ENCODE measurements at regions of chr1 and their contacts with region 1.

Region 1: DNA sequence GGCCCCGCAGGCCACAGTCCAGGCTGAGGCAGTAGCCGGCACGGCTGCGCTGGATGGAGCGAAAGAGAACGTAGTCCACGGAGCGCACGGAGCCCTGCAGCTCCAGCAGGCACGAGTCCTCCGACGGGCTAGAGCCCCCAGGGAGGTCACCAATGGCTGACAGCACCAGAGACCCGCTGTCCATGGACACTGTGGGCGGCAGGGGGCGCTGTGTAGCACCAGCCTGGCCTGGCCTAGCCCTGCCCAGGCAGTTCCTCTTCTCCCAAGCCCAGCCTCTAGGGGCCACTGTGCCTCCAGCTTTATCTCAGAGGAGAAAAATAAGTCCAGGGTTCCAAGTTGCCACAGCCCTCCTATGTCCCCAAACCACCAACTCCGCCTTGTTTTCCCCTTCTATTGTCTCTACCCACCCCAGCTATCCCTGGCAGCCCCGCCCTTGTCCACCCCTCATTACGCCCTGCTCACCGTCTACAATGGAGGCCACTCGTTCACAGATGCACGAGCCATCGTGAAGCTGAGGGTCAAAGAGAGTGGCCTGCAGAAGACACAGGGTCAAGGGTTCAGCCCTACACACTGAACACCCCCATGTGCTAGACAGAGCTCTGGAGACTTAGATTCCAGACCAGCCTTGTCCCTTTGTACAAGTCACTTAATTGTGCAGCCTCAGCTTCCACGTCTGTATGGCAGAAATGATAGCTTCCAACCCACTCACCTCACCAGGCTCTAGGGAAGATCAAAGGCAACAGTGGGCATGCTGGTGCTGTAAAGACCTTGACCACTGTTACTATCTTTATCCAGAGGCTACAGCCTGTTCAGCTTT is 4.4 kb downstream of the ENTREP3 start:
- DNase-seq: peak; percentile 98
- H3K4me3 ChIP-seq: peak overlapping the region; percentile 42
- H3K27ac ChIP-seq: peak overlapping the region; percentile 80
- H3K4me1 ChIP-seq: peaks cover 23% of the 10 kb centered on the region
- H3K27me3 ChIP-seq: no peaks in the 10 kb centered on the region
- CTCF ChIP-seq: peak; percentile 100

Region 2: DNA sequence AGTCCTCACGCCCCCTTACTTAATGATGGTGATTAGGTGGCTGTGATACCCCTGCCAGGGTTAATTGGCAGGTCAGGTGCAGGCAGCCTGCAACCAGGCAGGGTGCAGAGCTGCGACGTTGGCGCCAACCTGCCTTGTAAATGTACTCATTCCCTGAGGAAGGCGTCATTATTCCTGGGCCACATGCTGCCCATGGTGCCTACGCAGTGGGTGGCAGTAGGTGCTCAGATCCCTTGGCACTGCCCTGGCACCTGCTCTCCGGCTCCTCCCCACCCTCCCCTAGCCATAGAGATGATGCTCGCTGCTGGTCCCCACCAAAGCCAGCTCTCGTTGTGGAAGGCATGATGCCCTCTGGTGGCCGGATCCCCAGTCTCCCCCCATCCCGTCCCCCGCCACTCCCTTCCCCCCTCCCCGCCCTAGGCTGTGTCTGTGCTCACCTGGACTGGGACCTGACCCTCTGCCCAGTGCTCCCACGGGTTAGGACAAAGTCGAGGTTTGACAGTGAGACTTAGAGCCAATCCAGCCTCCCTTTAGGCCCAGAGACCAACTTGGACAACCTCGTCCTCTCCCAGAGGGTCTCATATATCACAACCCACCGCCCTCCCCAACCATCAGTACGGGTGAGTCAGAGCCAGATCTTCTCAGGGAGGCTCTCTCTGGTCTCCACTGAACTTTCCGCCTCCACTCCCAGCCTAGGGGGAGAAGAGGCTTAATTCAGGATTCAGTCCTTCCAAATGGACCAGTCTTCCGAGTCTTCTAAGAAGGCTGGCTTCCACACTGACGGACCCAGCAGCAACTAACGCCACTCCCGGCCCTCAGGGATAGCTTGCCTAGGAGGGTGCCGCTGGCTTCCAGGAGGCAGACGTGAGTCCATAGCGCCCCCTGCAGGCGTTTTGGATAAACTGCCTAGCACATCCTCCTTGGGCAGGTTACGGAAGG is 83.4 kb before region 1 on chr1:
- CTCF ChIA-PET with region 1: no interaction called
- POLR2A ChIA-PET with region 1: no interaction called
- intact Hi-C with region 1: no loop called
- DNase-seq: peak; percentile 93
- H3K4me3 ChIP-seq: peak overlapping the region; percentile 11
- H3K27ac ChIP-seq: no peak overlapping the region
- H3K4me1 ChIP-seq: peaks cover 12% of the 10 kb centered on the region
- H3K27me3 ChIP-seq: no peaks in the 10 kb centered on the region
- CTCF ChIP-seq: peak; percentile 98

Region 3: DNA sequence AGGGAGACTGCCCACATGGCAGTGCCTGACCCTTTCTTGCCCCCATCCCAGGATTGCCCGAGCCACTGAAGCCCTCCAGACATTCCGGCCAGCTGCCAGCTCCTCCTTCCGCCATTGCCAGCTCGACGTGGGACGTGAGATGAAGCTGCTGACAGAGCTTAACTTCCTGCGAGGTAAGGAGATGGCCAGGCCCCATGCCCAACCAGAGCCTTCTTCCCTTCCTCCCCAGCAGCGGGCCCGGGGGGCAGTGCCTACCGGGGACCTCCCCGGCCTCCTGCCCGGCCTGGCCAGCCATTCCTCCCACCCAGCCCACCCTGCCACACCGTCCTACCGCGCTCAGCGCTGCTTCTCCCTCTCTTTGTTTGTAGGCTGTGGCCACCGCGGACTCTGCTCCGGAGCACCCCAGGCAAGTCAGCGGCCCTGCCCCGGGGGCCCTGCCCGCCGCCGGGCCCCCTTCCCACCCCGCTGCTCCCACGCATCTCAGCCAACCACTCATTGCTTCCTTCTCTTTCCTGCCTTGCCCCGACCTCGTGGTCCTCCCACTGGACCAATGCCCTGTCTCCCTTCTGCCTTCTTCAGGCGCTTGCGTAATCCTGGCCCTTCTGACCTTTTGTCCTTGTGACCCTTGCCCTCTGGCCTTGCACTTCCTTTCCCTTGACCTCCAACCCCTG is 72.3 kb before region 1 on chr1:
- CTCF ChIA-PET with region 1: no interaction called
- POLR2A ChIA-PET with region 1: no interaction called
- intact Hi-C with region 1: no loop called
- DNase-seq: no peak
- H3K4me3 ChIP-seq: no peak overlapping the region
- H3K27ac ChIP-seq: no peak overlapping the region
- H3K4me1 ChIP-seq: peaks cover 15% of the 10 kb centered on the region
- H3K27me3 ChIP-seq: no peaks in the 10 kb centered on the region
- CTCF ChIP-seq: no peak

Region 4: GRCh38 chr1:155208541-155209311 is 42.1 kb before region 1 on chr1 and contains the start of gene MTX1:
- CTCF ChIA-PET with region 1: interaction called, 15 read pairs
- POLR2A ChIA-PET with region 1: no interaction called
- intact Hi-C with region 1: no loop called
- DNase-seq: peak; percentile 87
- H3K4me3 ChIP-seq: peak within 1 kb of the TSS; percentile 95
- H3K27ac ChIP-seq: peak within 1 kb of the TSS; percentile 93
- H3K4me1 ChIP-seq: peaks cover 16% of the 10 kb centered on the region
- H3K27me3 ChIP-seq: no peaks in the 10 kb centered on the region
- CTCF ChIP-seq: no peak
- total RNA-seq, gene MTX1: 65.2 and 75.9 TPM in 2 replicates

Region 5: GRCh38 chr1:155261852-155262673 is 11.2 kb after region 1 on chr1 and contains the start of gene SCAMP3:
- CTCF ChIA-PET with region 1: interaction called, 12 read pairs
- POLR2A ChIA-PET with region 1: no interaction called
- intact Hi-C with region 1: no loop called
- DNase-seq: peak; percentile 98
- H3K4me3 ChIP-seq: peak within 1 kb of the TSS; percentile 69
- H3K27ac ChIP-seq: peak within 1 kb of the TSS; percentile 81
- H3K4me1 ChIP-seq: peaks cover 2% of the 10 kb centered on the region
- H3K27me3 ChIP-seq: no peaks in the 10 kb centered on the region
- CTCF ChIP-seq: peak; percentile 4; the same call in 1 of the 2 replicates
- total RNA-seq, gene SCAMP3: 109 and 115 TPM in 2 replicates

Region 6: DNA sequence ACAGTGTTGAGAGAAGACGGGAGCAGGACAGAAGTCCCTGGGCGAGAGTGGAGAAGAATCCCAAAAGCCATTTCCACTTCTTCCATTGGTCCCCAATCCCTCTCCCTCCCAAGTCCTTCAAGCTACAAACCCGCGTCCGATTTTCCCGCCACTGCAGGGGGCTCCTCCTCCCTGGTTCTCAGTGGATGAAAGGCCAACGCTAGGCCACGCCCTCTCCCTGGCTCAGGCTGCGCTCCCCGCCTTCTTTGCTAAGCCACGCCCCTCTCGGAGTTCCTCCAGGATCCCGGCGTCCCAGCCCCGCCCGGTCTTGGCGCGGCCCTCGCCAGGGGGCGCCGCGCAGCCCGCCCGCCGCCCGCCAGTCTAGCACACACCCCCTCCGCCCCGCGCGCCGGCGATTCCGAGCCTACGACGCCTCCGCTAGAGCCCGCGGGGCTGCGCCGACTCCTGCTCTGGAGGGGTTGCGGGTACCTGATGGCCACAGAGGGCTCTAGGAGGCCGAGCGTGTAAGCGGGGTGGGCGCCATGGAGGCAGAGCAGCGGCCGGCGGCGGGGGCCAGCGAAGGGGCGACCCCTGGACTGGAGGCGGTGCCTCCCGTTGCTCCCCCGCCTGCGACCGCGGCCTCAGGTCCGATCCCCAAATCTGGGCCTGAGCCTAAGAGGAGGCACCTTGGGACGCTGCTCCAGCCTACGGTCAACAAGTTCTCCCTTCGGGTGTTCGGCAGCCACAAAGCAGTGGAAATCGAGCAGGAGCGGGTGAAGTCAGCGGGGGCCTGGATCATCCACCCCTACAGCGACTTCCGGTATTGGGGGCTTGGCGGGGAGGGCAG is 26.4 kb after region 1 on chr1 and contains the start of gene HCN3:
- CTCF ChIA-PET with region 1: interaction called, 19 read pairs
- POLR2A ChIA-PET with region 1: no interaction called
- intact Hi-C with region 1: loop called (anchors 1 kb)
- DNase-seq: peak; percentile 98
- H3K4me3 ChIP-seq: peak within 1 kb of the TSS; percentile 73
- H3K27ac ChIP-seq: peak within 1 kb of the TSS; percentile 48
- H3K4me1 ChIP-seq: peaks cover 22% of the 10 kb centered on the region
- H3K27me3 ChIP-seq: no peaks in the 10 kb centered on the region
- CTCF ChIP-seq: peak; percentile 60
- total RNA-seq, gene HCN3: 11.3 and 12.2 TPM in 2 replicates

Region 7: GRCh38 chr1:155360051-155360450 is 109.2 kb after region 1 on chr1:
- CTCF ChIA-PET with region 1: no interaction called
- POLR2A ChIA-PET with region 1: no interaction called
- intact Hi-C with region 1: no loop called
- DNase-seq: no peak
- H3K4me3 ChIP-seq: no peak overlapping the region
- H3K27ac ChIP-seq: no peak overlapping the region
- H3K4me1 ChIP-seq: no peaks in the 10 kb centered on the region
- H3K27me3 ChIP-seq: no peaks in the 10 kb centered on the region
- CTCF ChIP-seq: no peak

Region 8: DNA sequence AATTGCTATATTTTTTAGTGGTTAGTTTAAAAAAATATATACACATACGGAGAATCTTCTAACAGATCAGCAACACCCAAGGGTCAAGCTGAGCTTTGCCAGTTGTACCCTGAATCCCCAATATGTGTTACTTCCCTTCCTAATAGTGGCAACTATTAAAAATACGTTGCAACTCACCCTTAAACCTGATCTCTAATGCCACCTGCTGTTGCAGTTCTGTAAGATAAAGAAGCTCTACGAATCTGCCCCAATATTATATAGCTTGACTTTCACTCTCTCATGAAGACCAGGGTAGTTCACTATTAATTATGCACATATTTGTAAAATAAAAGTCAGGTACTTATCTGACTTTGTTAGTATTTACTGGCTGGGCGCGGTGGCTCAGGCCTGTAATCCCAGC is 253.4 kb after region 1 on chr1:
- CTCF ChIA-PET with region 1: interaction called, 3 read pairs
- POLR2A ChIA-PET with region 1: no interaction called
- intact Hi-C with region 1: loop called (anchors 10 kb)
- DNase-seq: peak; percentile 57
- H3K4me3 ChIP-seq: no peak overlapping the region
- H3K27ac ChIP-seq: no peak overlapping the region
- H3K4me1 ChIP-seq: peaks cover 22% of the 10 kb centered on the region
- H3K27me3 ChIP-seq: no peaks in the 10 kb centered on the region
- CTCF ChIP-seq: peak; percentile 53; the same call in 1 of the 2 replicates

Region 9: GRCh38 chr1:155591770-155592169 is 340.9 kb after region 1 on chr1:
- CTCF ChIA-PET with region 1: no interaction called
- POLR2A ChIA-PET with region 1: no interaction called
- intact Hi-C with region 1: loop called (anchors 2 kb)
- DNase-seq: peak; percentile 86
- H3K4me3 ChIP-seq: no peak overlapping the region
- H3K27ac ChIP-seq: no peak overlapping the region
- H3K4me1 ChIP-seq: peaks cover 7% of the 10 kb centered on the region
- H3K27me3 ChIP-seq: no peaks in the 10 kb centered on the region
- CTCF ChIP-seq: peak; percentile 62

Measured in A673 (cell line).